OCI-LY7 (cell line): ENCODE measurements at regions of chr2 and their contacts with region 1.

Region 1: GRCh38 chr2:69643602-69644505 is at the start of gene AAK1:
- DNase-seq: peak; percentile 86
- H3K4me3 ChIP-seq: peak within 1 kb of the TSS; percentile 92
- H3K27ac ChIP-seq: peak within 1 kb of the TSS; percentile 75
- H3K4me1 ChIP-seq: peaks cover 28% of the 10 kb centered on the region
- CTCF ChIP-seq: no peak; the same call in 1 of the 2 replicates
- total RNA-seq, gene AAK1: 2.3 and 8.5 TPM in 2 replicates

Region 2: DNA sequence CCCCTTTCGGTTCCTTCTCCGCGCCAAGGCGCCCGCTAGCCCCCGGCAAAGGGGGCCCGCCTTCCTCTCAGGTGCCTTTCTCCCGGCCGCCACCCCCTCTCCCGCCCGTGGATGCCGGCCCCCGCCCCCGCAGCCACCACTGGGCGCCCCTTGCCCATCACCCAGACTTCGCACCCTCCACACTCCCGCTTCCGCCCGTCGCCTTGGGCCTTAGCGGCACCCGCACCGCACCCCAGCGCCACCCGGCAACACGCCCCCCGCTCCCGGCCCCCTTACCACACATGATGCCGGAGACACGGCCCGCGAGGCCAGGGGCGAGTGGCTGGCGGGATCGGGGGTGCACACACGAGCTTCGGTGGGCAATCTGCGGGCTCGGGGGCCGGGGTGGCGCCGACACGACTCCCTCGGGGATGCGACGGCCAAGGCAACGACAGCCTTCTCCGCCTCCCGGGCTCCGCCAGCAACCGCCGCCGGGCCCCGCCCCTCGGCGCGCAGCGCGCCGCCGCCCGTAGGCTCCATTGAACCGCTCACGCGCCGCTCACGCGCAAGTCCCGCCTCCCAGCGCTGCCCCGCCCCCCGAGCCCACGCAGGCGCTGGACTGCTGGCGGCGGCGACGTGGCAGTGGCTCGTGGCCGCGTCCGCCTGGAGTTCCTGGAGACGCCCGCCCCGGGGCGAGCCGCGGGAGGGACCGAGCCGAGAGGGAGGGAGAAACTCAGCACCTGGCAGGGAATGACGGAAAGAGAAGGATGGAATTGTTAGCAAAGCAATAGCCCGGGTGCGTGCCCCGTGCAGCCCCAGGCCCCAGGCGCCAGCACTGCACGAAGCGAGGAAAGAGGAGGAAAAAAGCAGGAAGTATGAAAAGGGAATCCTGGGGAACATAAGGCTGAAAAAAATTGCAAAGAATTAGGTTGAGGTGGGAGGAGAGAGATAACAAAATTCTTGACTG is 256.8 kb before region 1 on chr2 and contains the start of gene GFPT1:
- CTCF ChIA-PET with region 1: no interaction called
- POLR2A ChIA-PET with region 1: no interaction called
- intact Hi-C with region 1: loop called (anchors 2 kb)
- DNase-seq: peak; percentile 92
- H3K4me3 ChIP-seq: peak within 1 kb of the TSS; percentile 90
- H3K27ac ChIP-seq: peak within 1 kb of the TSS; percentile 48
- H3K4me1 ChIP-seq: peaks cover 21% of the 10 kb centered on the region
- CTCF ChIP-seq: no peak
- total RNA-seq, gene GFPT1: 11.0 and 14.8 TPM in 2 replicates

Region 3: DNA sequence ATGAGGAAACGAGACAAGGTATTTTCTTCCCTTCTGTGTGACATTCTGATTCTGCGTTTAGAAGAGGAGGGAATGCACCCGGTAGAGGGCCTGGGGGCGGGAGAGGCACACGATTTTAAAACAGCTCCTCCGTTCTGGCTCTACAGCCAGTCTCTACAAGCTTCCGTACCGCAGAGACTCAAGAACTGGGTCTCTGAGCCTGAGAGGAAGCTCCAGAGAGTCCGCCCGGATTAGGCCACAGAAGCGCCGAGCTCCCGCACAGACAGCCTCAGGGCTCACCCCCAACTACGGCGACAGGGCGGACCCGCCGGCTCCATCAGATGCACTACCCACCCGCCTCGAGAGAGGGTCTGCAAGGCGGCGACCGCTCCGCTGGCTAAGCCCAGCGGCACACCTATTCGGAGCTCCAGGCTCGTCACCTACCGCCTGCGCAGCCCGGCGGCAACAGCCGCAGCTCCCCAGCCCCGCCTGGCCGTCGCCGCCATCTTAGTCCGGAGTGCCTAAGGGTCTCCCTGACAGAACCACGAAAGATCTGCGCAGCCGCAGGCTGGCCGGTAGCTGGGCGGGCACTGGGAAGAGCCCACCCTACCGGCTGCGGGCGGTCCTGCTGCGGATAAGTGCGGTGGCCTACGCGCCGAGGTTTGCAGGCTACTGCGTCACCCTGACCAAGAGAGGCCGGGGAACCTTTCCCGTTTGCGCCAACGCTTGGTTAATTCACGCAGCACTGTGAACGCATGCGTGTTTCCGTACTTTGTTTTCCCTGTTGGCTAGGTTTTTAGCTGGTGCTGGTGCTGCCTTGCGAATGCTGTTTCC is 206.7 kb before region 1 on chr2 and contains the start of gene NFU1:
- CTCF ChIA-PET with region 1: no interaction called
- POLR2A ChIA-PET with region 1: no interaction called
- intact Hi-C with region 1: loop called (anchors 10 kb)
- DNase-seq: peak; percentile 93
- H3K4me3 ChIP-seq: peak within 1 kb of the TSS; percentile 76
- H3K27ac ChIP-seq: peak within 1 kb of the TSS; percentile 75
- H3K4me1 ChIP-seq: peaks cover 13% of the 10 kb centered on the region
- CTCF ChIP-seq: peak; percentile 64
- total RNA-seq, gene NFU1: 15.4 and 17.1 TPM in 2 replicates

Region 4: DNA sequence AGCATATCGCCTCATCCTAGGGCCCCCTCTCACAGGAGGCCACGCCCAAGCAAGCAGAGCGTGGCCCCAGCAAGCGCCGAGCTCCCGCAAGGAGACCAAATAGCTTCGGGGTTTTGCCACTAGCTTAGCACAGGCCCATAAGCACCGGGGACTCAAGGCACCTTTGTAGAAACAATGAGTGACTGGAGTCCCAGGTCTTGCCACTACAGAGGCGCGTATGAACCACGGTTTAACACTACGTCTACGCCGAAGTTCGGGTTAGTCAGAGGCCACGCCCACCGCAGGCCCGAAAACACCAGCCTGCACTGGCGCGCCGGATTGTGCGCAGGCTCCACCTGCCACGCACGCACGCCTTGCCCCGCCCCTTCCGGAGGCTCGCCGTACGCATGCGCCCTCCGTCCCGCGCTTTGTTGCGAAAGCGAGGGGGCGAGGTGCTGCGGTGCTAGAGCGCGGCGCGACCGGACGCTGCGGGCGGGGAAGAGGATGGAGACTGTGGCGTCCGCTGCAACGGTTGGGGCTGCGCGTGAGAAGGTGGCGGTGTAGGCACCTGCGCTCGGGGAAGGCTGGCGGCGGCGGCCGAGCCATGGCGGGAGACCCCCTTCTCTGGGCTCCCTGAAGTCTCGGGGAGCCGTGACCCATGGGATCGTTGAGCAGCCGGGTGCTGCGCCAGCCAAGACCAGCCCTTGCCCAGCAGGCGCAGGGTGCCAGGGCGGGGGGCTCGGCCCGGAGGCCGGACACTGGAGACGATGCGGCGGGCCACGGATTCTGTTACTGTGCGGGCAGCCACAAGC is 185.6 kb after region 1 on chr2 and contains the start of gene GMCL1:
- CTCF ChIA-PET with region 1: no interaction called
- POLR2A ChIA-PET with region 1: no interaction called
- intact Hi-C with region 1: loop called (anchors 10 kb)
- DNase-seq: peak; percentile 98
- H3K4me3 ChIP-seq: peak within 1 kb of the TSS; percentile 94
- H3K27ac ChIP-seq: peak within 1 kb of the TSS; percentile 65
- H3K4me1 ChIP-seq: peaks cover 27% of the 10 kb centered on the region
- CTCF ChIP-seq: no peak
- total RNA-seq, gene GMCL1: 11.9 and 14.4 TPM in 2 replicates